MCF 10A (cell line): ENCODE measurements at regions of chr6 and their contacts with region 1.

Region 1: DNA sequence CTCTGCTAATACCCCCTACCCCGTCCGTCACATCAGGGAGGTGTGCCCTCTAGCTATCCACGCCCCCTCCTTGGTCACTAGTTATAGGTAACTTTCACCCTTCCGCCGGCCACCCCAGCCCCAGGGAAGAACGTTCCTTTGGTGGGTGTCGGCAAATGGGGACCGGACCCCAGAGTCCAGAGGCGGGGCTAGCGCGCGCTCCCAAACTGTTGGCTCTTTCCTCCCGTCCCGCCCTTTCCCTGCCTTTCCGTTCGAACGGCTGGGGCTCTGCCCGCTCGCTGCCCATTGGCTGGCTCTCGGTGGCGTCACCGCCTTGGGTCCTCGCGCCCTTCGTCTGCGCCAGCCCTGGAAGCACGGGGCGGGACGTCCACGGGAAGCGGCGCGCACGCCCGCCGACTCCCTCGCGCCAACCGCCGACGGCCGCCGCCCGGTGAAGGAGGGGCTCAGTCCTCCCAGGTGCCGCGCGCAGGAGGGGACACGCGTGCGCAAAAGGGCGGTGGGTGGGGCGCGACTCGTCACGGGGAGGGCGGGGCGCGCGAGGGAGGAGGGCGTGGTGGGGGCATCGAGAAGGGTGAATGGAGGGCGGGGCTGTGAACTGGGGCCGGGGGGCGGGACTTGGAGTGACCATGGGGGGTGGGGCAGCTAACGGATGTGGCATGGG is 634 bp upstream of the PHF1 start:
- DNase-seq: peak; percentile 98
- H3K4me3 Mint-ChIP-seq: peak overlapping the region; percentile 95
- H3K27ac Mint-ChIP-seq: peak overlapping the region; percentile 95
- H3K4me1 Mint-ChIP-seq: peaks cover 22% of the 10 kb centered on the region
- H3K27me3 Mint-ChIP-seq: no peaks in the 10 kb centered on the region
- CTCF ChIP-seq: no peak

Region 2: GRCh38 chr6:33276864-33277662 is 133.1 kb before region 1 on chr6 and contains the start of gene B3GALT4:
- CTCF ChIA-PET with region 1: interaction called, 3 read pairs
- POLR2A ChIA-PET with region 1: no interaction called
- intact Hi-C with region 1: loop called (anchors 1 kb)
- DNase-seq: peak; percentile 72
- H3K4me3 Mint-ChIP-seq: peak within 1 kb of the TSS; percentile 99
- H3K27ac Mint-ChIP-seq: peak within 1 kb of the TSS; percentile 80
- H3K4me1 Mint-ChIP-seq: peaks cover 30% of the 10 kb centered on the region
- H3K27me3 Mint-ChIP-seq: no peaks in the 10 kb centered on the region
- CTCF ChIP-seq: peak; percentile 52
- total RNA-seq, gene B3GALT4: 0.37 and 0.58 TPM in 2 replicates

Region 3: GRCh38 chr6:33391278-33391921 is 18.8 kb before region 1 on chr6 and contains the start of gene KIFC1:
- CTCF ChIA-PET with region 1: interaction called, 11 read pairs
- POLR2A ChIA-PET with region 1: interaction called, 15 read pairs
- intact Hi-C with region 1: loop called (anchors 1 kb)
- DNase-seq: peak; percentile 99
- H3K4me3 Mint-ChIP-seq: peak within 1 kb of the TSS; percentile 81
- H3K27ac Mint-ChIP-seq: peak within 1 kb of the TSS; percentile 72
- H3K4me1 Mint-ChIP-seq: peaks cover 37% of the 10 kb centered on the region
- H3K27me3 Mint-ChIP-seq: no peaks in the 10 kb centered on the region
- CTCF ChIP-seq: peak; percentile 89
- total RNA-seq, gene KIFC1: 20.3 and 27.1 TPM in 2 replicates

Region 4: DNA sequence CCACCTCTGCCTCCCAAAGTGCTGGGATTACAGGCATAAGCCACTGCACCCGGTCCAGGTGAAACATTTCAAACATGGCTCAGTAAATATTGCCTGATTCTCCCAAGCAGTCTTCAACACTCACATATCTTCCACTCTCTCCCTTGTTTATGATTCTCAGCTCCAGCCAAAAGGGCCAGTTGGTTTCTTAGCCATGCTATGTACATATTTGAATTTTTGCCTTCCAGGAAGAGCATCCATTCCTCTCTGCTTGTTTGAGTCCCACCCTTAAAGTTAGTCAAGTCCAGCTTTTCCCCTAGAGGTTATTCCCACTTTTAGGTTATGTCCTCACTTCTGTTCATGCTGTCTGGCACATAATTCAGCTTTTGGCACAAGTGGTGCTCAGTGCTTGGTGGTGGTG is 12.6 kb before region 1 on chr6:
- CTCF ChIA-PET with region 1: interaction called, 11 read pairs
- POLR2A ChIA-PET with region 1: interaction called, 15 read pairs
- intact Hi-C with region 1: no loop called
- DNase-seq: no peak
- H3K4me3 Mint-ChIP-seq: no peak overlapping the region
- H3K27ac Mint-ChIP-seq: peak overlapping the region; percentile 43
- H3K4me1 Mint-ChIP-seq: peaks cover 31% of the 10 kb centered on the region
- H3K27me3 Mint-ChIP-seq: no peaks in the 10 kb centered on the region
- CTCF ChIP-seq: no peak